Calu3 (cell line): ENCODE measurements at regions of chr17 and their contacts with region 1.

Region 1: DNA sequence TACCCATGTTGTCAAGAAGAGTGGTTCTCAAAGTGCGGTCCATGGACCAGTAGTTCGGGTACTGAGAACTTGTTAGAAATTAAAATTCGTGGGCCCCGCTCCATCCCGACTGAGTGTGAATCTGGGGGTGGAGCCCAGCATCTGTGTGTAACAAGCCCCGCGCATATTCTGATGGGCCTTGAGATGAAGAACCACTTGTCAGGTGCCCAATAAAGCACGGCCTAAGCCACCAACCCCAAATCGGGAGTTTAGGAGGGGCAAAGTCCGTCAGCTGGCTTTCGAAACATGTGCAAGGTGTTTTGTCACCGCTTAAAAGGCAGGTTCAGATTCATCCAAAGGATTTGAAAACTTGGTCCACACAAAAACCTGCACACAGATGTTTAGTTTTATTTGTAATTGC is 29.5 kb downstream of the PSMD12 start:
- DNase-seq: no peak
- H3K4me3 Mint-ChIP-seq: no peak overlapping the region
- H3K27ac Mint-ChIP-seq: peak overlapping the region; percentile 67
- H3K4me1 Mint-ChIP-seq: no peaks in the 10 kb centered on the region
- H3K27me3 Mint-ChIP-seq: no peaks in the 10 kb centered on the region
- CTCF ChIP-seq: no peak

Region 2: GRCh38 chr17:66951935-66952662 is 384.8 kb before region 1 on chr17:
- CTCF ChIA-PET with region 1: interaction called, 11 read pairs
- intact Hi-C with region 1: no loop called
- DNase-seq: peak; percentile 94
- H3K4me3 Mint-ChIP-seq: peak overlapping the region; percentile 57
- H3K27ac Mint-ChIP-seq: peak overlapping the region; percentile 92
- H3K4me1 Mint-ChIP-seq: peaks cover 51% of the 10 kb centered on the region
- H3K27me3 Mint-ChIP-seq: no peaks in the 10 kb centered on the region
- CTCF ChIP-seq: no peak

Region 3: GRCh38 chr17:67055811-67056745 is 280.8 kb before region 1 on chr17:
- CTCF ChIA-PET with region 1: no interaction called
- intact Hi-C with region 1: no loop called
- DNase-seq: no peak
- H3K4me3 Mint-ChIP-seq: no peak overlapping the region
- H3K27ac Mint-ChIP-seq: no peak overlapping the region
- H3K4me1 Mint-ChIP-seq: no peaks in the 10 kb centered on the region
- H3K27me3 Mint-ChIP-seq: peaks cover 10% of the 10 kb centered on the region
- CTCF ChIP-seq: no peak

Region 4: GRCh38 chr17:67245073-67245755 is 91.6 kb before region 1 on chr17 and contains the start of gene HELZ:
- CTCF ChIA-PET with region 1: no interaction called
- intact Hi-C with region 1: loop called (anchors 10 kb)
- DNase-seq: peak; percentile 83
- H3K4me3 Mint-ChIP-seq: peak within 1 kb of the TSS; percentile 84
- H3K27ac Mint-ChIP-seq: peak within 1 kb of the TSS; percentile 77
- H3K4me1 Mint-ChIP-seq: peaks cover 28% of the 10 kb centered on the region
- H3K27me3 Mint-ChIP-seq: no peaks in the 10 kb centered on the region
- CTCF ChIP-seq: no peak
- total RNA-seq, gene HELZ: 50.7 and 60.8 TPM in 2 replicates

Region 5: GRCh38 chr17:67400193-67400592 is 63.3 kb after region 1 on chr17:
- CTCF ChIA-PET with region 1: no interaction called
- intact Hi-C with region 1: no loop called
- DNase-seq: no peak
- H3K4me3 Mint-ChIP-seq: no peak overlapping the region
- H3K27ac Mint-ChIP-seq: no peak overlapping the region
- H3K4me1 Mint-ChIP-seq: no peaks in the 10 kb centered on the region
- H3K27me3 Mint-ChIP-seq: no peaks in the 10 kb centered on the region
- CTCF ChIP-seq: no peak